ENCODE measurements at regions of chr19 and their contacts with region 1.

Region 1: GRCh38 chr19:48308631-48309586 is 16.4 kb upstream of the EMP3 start:
- DNase-seq: no peak
- H3K4me3 ChIP-seq: no peak overlapping the region
- H3K27ac ChIP-seq: no peak overlapping the region
- H3K4me1 ChIP-seq: peaks cover 0 to 8% (median 4%) of the 10 kb centered on the region in 4 experiments; a peak in 5 of 7 replicates
- H3K27me3 ChIP-seq: no peaks in the 10 kb centered on the region
- CTCF ChIP-seq: peak in 2 of 3 experiments; percentile 61 to 63; a peak in 3 of 4 replicates
- EP300 ChIP-seq: no peak
- POLR2A ChIP-seq: no peak
- RAD21 ChIP-seq: peak; percentile 26 to 45; a peak in 3 of 4 replicates

Region 2: DNA sequence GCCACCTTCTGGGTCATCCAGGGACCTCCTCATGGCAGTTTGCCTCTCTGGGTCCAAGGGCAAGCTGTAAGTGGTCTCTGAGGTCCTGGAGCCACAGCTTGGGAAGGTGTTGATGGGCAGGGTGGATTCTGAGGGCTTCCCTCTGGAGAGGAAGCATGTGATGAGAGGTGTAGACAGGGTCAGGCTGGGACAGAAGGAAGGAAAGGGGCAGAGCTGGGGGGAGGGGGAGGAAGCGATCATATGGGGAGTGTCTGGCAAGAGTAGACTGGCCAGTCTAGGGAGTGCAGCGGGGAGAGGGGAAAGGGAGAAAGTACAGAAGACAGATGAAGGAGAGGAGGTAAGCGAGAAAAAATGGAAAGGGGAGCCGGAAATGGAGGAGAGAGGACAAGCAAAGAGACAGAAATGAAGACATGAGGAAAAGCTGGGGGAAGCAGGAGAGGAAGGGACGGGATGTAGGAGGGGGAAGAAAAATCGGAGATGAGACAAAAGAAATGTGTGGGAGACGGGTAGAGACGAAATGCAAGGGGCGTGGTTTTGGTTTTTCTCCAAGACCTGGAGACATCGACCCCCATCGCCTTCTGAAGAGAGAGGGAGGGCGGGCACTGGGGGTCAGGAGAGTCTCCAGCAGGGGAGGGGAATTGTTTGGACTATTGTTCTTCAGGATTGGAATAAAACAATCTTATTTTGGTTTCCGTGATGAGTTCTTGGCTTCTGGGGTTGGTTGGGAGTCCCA is 111.8 kb before region 1 on chr19:
- CTCF ChIA-PET with region 1: no interaction called
- POLR2A ChIA-PET with region 1: no interaction called
- DNase-seq: no peak
- H3K4me3 ChIP-seq: no peak overlapping the region
- H3K27ac ChIP-seq: no peak overlapping the region
- H3K4me1 ChIP-seq: peaks cover 0 to 4% (median 0%) of the 10 kb centered on the region in 4 experiments; a peak in 1 of 7 replicates
- H3K27me3 ChIP-seq: no peaks in the 10 kb centered on the region; a peak in 1 of 7 replicates
- CTCF ChIP-seq: no peak
- EP300 ChIP-seq: no peak
- POLR2A ChIP-seq: no peak
- RAD21 ChIP-seq: no peak

Region 3: DNA sequence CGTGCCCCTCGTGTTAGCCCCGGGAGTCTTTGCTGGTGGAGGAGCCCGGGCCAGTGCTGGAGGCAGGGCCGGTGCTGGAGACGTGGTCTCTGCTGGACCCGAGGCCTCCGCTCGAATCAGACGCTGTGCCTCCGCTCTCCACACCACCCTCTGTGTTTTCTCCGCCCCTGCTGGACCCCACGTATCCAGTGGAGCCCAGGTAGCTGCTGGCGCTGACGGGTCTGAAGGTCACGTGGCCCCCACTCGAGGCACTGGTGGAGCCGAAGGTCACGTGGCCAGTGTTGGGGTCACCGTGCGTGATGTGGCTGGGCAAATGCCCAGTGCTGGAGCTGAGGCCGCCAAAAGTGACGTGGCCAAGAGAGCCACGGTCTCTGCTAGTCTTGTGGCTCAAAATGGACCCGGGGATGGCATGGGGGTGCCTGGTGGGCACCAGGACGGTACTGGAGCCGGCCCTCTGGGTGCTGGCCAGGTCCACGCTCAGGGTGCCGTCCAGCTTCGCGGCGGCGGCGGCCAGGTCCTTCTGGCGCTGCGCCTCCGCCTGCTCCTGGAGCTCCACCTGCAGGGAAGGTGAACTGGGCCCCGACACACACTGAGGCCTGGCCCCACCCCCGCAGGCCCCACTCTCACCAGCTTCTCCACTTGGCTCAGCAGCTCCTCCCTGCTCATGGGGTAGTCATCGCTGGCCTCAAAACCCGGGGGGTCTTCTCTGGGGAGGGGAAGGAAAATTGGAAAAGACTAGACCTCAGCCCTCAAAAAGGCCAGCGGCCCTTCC is 11.8 kb before region 1 on chr19:
- CTCF ChIA-PET with region 1: interaction called, 22 read pairs
- POLR2A ChIA-PET with region 1: interaction called, 3 read pairs
- DNase-seq: peak in 1 of 2 experiments; percentile 60
- H3K4me3 ChIP-seq: no peak overlapping the region
- H3K27ac ChIP-seq: no peak overlapping the region
- H3K4me1 ChIP-seq: peaks cover 0 to 14% (median under 1%) of the 10 kb centered on the region in 4 experiments; a peak in 3 of 7 replicates
- H3K27me3 ChIP-seq: no peaks in the 10 kb centered on the region
- CTCF ChIP-seq: peak; percentile 1 to 18 (median 13); a peak in 2 of 4 replicates
- EP300 ChIP-seq: no peak
- POLR2A ChIP-seq: no peak
- RAD21 ChIP-seq: 0 out of 4 replicates have a peak, but pooled peaks have one; percentile 9 to 20

Region 4: DNA sequence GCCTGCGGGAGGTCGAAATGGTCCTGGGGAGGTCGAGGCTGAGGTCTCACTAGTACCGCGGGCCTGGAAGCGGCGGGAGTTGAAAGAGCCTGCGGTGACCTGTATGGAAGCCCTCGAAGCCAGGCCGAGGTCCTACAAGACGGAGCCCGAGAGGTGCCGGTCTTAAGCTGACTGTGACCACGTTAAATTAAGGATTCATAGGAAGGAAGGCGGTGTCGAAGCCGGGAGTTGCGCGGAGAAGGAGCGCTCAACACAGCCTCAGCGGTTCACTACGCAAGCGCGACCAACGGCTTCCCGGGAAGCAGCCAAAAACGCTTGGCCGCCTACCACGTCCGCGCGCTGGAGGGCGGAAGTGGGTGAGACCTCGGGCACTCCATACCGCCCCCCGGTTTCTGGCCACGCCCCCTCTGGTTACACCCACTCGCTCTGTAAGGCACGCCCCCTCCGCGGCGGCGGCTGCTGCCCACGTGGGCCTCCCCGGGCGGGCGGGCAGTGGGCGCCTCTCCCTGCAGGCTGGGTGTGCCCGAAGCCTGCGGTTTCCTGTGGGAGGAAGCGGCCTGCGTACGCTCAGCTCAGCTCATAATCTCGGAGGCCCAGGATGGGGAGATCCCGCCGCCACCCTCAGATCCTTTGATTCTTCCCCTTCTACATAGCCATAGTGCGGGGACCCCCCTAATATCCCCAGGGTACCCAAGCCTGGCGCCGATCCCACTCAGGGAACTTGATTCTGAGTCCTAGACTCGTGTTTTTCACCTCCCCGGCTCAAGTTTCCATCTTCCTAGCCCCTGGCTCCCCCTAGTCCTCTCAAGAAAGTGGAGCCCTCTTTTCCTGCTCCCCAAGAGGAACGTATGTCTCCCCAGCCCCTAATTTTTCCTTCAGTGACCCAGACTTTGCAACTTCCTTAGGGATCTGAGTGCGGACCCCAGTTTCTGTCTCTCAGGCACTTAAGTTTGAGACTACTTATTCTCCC is 13.0 kb after region 1 on chr19:
- CTCF ChIA-PET with region 1: interaction called, 22 read pairs
- POLR2A ChIA-PET with region 1: interaction called, 3 read pairs
- DNase-seq: peak; percentile 86 to 98
- H3K4me3 ChIP-seq: peak overlapping the region; percentile 49 to 81 (median 64)
- H3K27ac ChIP-seq: peak overlapping the region; percentile 92
- H3K4me1 ChIP-seq: peaks cover 0 to 20% (median 10%) of the 10 kb centered on the region in 4 experiments; a peak in 6 of 7 replicates
- H3K27me3 ChIP-seq: peaks cover 0 to 5% (median 2%) of the 10 kb centered on the region in 4 experiments; a peak in 1 of 7 replicates
- CTCF ChIP-seq: peak in 2 of 3 experiments; percentile 4 to 16; a peak in 1 of 4 replicates
- EP300 ChIP-seq: no peak
- POLR2A ChIP-seq: peak; percentile 66 to 92
- RAD21 ChIP-seq: no peak

Region 5: GRCh38 chr19:48333467-48334384 is 24.8 kb after region 1 on chr19:
- CTCF ChIA-PET with region 1: interaction called, 37 read pairs
- POLR2A ChIA-PET with region 1: interaction called, 5 read pairs
- DNase-seq: peak in 1 of 2 experiments; percentile 90
- H3K4me3 ChIP-seq: peak overlapping the region; percentile 33 to 57 (median 46)
- H3K27ac ChIP-seq: no peak overlapping the region
- H3K4me1 ChIP-seq: peaks cover 4 to 23% (median 10%) of the 10 kb centered on the region in 4 experiments
- H3K27me3 ChIP-seq: no peaks in the 10 kb centered on the region
- CTCF ChIP-seq: peak; percentile 91 to 98 (median 93)
- EP300 ChIP-seq: no peak
- POLR2A ChIP-seq: peak in 1 of 2 experiments; percentile 61; a peak in 2 of 3 replicates
- RAD21 ChIP-seq: peak; percentile 83 to 89

Region 6: DNA sequence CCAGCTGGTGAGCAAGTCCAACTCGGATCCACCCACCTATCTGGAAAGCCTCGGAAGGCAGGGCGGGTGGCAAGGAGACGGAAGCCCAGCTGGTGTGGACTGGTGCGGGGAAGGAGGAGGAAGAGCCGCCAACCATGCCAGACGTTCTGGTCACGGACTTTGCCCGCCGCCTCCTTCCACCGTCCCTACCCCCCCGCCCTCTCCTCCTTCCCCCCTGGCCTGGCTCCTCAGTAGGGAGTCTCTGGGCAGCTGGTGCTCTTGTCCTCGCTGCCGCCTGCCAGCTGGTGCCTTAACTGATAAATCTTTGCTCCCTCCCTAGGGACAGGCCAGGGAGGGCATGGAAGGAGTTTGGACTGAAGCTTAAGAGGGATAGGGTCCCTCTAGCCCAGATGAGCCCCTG is 60.0 kb after region 1 on chr19:
- CTCF ChIA-PET with region 1: no interaction called
- POLR2A ChIA-PET with region 1: no interaction called
- DNase-seq: no peak
- H3K4me3 ChIP-seq: no peak overlapping the region
- H3K27ac ChIP-seq: no peak overlapping the region
- H3K4me1 ChIP-seq: peaks cover 0 to 5% (median 4%) of the 10 kb centered on the region in 4 experiments; a peak in 4 of 7 replicates
- H3K27me3 ChIP-seq: peaks cover 0 to 10% (median 2%) of the 10 kb centered on the region in 4 experiments; a peak in 3 of 7 replicates
- CTCF ChIP-seq: no peak
- EP300 ChIP-seq: no peak
- POLR2A ChIP-seq: no peak
- RAD21 ChIP-seq: no peak